ENCODE measurements at regions of chr3 and their contacts with region 1.

Region 1: DNA sequence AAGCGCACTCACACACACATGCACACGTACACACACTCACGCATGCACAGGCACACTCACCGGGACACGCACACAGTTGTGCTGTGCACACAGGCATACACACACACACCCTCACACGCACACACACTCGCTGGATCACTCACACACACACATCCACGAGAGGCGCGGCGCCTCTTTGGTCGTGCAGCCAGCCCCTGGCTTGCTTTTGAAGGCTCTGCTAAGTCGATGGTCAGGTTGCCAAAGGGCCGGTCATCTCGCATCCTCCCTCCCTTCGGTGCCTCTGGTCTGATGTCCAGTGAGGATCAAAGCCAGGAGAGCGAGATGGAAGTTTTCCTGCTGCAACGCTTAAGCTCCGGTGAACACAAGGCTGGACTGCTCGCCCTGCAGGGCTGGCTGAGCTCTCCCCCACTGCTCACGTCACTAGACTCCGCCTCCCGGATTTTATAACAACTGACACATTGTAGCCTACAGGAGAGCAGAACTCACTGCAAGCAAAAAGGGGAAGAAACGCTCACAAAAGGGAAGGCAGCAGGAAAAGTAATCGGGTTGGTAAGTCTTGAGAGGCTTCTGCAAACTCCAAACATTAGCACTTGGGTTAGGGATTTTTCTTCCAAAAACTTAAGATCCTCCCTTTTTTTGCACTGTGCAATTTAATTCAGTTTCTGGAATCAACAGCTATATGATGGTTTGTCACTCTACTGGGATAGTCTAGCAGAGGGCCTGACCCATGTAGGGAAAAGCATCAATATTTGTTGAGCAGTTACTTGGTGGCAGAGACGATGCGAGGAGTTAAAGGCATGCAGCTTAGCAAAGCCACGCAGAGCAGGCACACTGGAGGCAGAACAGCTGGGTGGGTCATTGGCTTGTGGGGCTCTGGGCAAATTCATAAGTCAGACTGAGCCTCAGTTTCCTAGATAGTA is at the start of gene SRGAP3:
- DNase-seq: peak; percentile 85 to 93 (median 88)
- ATAC-seq: peak; percentile 93 to 95 (median 94)
- H3K4me3 ChIP-seq: peak within 1 kb of the TSS; percentile 25 to 68 (median 56)
- H3K27ac ChIP-seq: peak within 1 kb of the TSS in 11 of 12 donors; percentile 35 to 91 (median 74)
- H3K4me1 ChIP-seq: peaks cover 0 to 36% (median 9%) of the 10 kb centered on the region in 12 donors
- H3K27me3 ChIP-seq: no peaks in the 10 kb centered on the region
- CTCF ChIP-seq: peak in 7 of 12 donors; percentile 16 to 47 (median 34)
- POLR2A ChIP-seq: peak in 1 of 2 donors; percentile 21
- total RNA-seq, gene SRGAP3: 3.1 to 16.8 (median 9.3) TPM

Region 2: GRCh38 chr3:9078561-9079240 is 170.8 kb before region 1 on chr3:
- intact Hi-C with region 1: loop called in 2 of 10 experiments (anchors 5 to 10 kb)
- DNase-seq: no peak
- ATAC-seq: no peak
- H3K4me3 ChIP-seq: no peak overlapping the region
- H3K27ac ChIP-seq: no peak overlapping the region
- H3K4me1 ChIP-seq: peaks cover 0 to 7% (median 0%) of the 10 kb centered on the region in 12 donors
- H3K27me3 ChIP-seq: no peaks in the 10 kb centered on the region
- CTCF ChIP-seq: peak in 1 of 12 donors; percentile 5
- POLR2A ChIP-seq: no peak

Region 3: GRCh38 chr3:9135930-9136525 is 113.5 kb before region 1 on chr3:
- intact Hi-C with region 1: loop called in 1 of 10 experiments (anchors 5 kb)
- DNase-seq: peak in 1 of 5 donors; percentile 35
- ATAC-seq: peak in 3 of 4 donors; percentile 69 to 80 (median 77)
- H3K4me3 ChIP-seq: peak overlapping the region in 11 of 12 donors; percentile 8 to 59 (median 50)
- H3K27ac ChIP-seq: peak overlapping the region in 2 of 12 donors; percentile 8 to 22
- H3K4me1 ChIP-seq: peaks cover 0 to 16% (median 3%) of the 10 kb centered on the region in 12 donors
- H3K27me3 ChIP-seq: peaks cover 0 to 11% (median 0%) of the 10 kb centered on the region in 9 donors
- CTCF ChIP-seq: no peak
- POLR2A ChIP-seq: no peak